Mammary epithelial cell (primary cell): ENCODE measurements at regions of chr15 and their contacts with region 1.

Region 1: DNA sequence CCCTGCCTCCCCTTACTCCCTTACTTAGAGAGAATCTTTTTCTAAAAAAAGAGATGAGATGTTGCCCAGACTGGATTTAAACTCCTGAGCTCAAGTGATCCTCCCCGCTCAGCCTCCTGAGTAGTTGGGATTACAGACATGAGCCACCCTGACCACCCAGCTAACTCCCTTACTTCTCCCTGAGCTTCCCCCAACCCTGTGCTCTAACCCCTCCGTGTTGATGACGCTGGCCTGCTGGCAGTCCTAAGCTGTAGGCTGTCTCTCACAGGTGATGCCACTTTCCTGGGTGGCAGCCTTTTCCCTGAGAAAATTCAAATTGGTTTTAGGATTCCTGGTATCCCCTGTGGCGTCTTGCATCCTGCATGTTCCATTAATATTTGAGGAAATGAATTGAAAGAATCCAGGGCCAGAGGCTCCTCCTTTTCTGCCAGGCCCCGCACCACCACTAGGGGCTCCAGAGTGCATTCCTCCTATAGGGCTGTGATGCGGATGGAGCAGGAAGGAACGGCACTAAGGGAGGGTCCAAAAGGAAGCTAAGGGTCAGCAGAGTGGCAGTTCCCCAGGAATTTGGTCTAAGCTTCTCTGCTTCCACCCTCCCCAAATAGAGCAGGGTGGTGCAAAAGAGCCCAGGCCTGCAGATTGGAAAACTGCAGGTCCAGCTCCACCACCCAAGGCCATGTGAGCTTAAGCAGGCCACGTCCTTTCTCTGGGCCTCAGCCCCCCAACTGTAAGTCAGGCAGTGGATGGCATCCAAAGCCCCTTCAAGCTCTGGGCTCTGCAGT is 101.1 kb downstream of the DAPK2 start:
- DNase-seq: peak; percentile 61
- H3K4me3 ChIP-seq: no peak overlapping the region
- H3K27ac ChIP-seq: peak overlapping the region; percentile 41
- H3K4me1 ChIP-seq: peaks cover 20% of the 10 kb centered on the region
- H3K27me3 ChIP-seq: no peaks in the 10 kb centered on the region
- CTCF ChIP-seq: peak; percentile 97 to 99

Region 2: DNA sequence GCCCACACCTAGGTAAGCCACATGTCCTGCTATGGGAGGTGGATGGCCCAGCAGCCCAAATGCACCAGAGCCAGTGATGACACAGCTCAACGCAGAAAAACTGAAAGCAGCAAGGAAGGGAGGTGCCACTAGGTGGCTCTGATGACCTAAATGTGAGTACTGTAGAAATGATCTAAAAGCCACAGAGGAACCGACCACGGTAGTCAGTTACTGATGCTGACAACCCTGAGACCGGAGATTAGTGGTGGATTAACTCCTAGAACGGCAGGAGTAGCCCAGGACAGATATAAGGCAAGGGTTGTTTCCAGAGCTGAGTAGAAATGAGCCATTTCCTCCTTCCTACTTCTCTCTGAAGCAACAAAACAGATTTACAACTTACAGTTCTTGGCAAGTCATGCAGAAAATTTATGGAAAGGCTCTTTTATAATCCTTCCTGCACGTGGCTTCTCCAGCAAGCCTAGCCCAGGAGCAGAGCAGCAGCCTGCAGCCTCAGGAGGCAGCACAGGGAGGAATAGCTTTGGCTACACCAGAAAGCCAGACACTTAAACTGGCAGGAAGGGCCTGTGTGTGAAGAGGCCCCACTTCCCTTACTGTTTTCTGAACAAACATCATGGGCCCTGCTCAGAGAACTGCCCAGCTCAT is 334.9 kb before region 1 on chr15:
- CTCF ChIA-PET with region 1: interaction called, 3 read pairs
- dilution Hi-C with region 1: no loop called
- in situ Hi-C with region 1: no loop called
- intact Hi-C with region 1: loop called (anchors 2 kb)
- DNase-seq: peak; percentile 67
- H3K4me3 ChIP-seq: no peak overlapping the region
- H3K27ac ChIP-seq: no peak overlapping the region
- H3K4me1 ChIP-seq: peaks cover under 1% of the 10 kb centered on the region
- H3K27me3 ChIP-seq: no peaks in the 10 kb centered on the region
- CTCF ChIP-seq: peak; percentile 81 to 85

Region 3: DNA sequence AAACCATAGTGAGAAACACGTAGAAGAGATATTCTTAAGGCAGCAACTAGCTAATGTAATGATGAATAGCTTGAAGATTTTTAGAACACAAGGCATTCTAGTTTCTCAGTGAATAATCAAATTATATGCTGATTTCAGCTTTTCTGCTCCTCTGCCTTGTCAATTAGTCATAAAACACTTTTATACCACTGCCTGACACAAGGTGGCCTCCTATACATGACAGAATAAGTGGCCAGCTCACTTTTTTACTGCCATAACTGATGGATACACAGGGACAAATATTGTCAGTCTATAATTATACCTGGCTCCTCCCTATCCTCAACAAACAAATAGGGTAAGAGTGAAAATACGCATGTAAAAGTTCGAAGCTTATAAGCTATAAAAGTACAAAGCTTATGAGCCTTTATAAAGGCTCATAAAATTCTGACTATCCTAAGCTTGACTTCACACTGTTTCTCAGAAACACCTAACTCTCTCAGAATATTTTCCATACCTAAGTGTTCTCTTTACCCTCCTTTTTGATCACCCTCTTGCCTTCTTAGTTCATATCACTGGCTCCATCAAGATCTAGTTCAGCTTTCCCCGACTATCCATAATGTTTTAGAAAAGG is 193.0 kb before region 1 on chr15:
- CTCF ChIA-PET with region 1: interaction called, 12 read pairs
- dilution Hi-C with region 1: no loop called
- in situ Hi-C with region 1: no loop called
- intact Hi-C with region 1: no loop called
- DNase-seq: peak; percentile 40
- H3K4me3 ChIP-seq: no peak overlapping the region
- H3K27ac ChIP-seq: no peak overlapping the region
- H3K4me1 ChIP-seq: no peaks in the 10 kb centered on the region
- H3K27me3 ChIP-seq: no peaks in the 10 kb centered on the region
- CTCF ChIP-seq: peak; percentile 80 to 83

Region 4: GRCh38 chr15:63983061-63983711 is 38.0 kb after region 1 on chr15:
- CTCF ChIA-PET with region 1: no interaction called
- dilution Hi-C with region 1: loop called (anchors 5 kb)
- in situ Hi-C with region 1: no loop called
- intact Hi-C with region 1: no loop called
- DNase-seq: no peak
- H3K4me3 ChIP-seq: no peak overlapping the region
- H3K27ac ChIP-seq: no peak overlapping the region
- H3K4me1 ChIP-seq: peaks cover 12% of the 10 kb centered on the region
- H3K27me3 ChIP-seq: no peaks in the 10 kb centered on the region
- CTCF ChIP-seq: no peak

Region 5: DNA sequence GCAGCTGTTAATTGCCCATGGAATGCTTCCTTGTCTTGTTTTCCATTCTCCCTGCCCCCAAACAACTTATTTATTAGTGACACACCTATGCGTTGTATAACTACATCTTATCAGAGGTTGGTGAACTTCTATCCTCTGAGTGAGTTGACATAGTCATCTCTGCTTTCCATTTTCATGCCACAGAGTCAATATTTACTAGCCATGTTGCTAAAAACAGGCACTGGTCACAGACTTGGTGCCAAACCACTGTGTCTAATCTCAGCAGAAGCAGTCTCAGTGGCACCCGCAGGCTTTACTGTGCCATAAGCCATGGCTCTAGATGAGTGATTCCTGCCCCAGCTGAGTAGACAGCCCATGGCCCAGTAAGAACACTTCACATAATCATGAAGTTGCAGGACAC is 74.6 kb after region 1 on chr15:
- CTCF ChIA-PET with region 1: no interaction called
- dilution Hi-C with region 1: loop called (anchors 5 kb)
- in situ Hi-C with region 1: no loop called
- intact Hi-C with region 1: no loop called
- DNase-seq: no peak
- H3K4me3 ChIP-seq: no peak overlapping the region
- H3K27ac ChIP-seq: no peak overlapping the region
- H3K4me1 ChIP-seq: peaks cover 28% of the 10 kb centered on the region
- H3K27me3 ChIP-seq: no peaks in the 10 kb centered on the region
- CTCF ChIP-seq: no peak

Region 6: GRCh38 chr15:64093627-64094417 is 148.6 kb after region 1 on chr15 and contains the start of gene CIAO2A:
- CTCF ChIA-PET with region 1: interaction called, 11 read pairs
- dilution Hi-C with region 1: no loop called
- in situ Hi-C with region 1: no loop called
- intact Hi-C with region 1: no loop called
- DNase-seq: peak; percentile 99
- H3K4me3 ChIP-seq: peak within 1 kb of the TSS; percentile 62 to 69 (median 67)
- H3K27ac ChIP-seq: peak within 1 kb of the TSS; percentile 64
- H3K4me1 ChIP-seq: peaks cover 29% of the 10 kb centered on the region
- H3K27me3 ChIP-seq: no peaks in the 10 kb centered on the region
- CTCF ChIP-seq: no peak
- total RNA-seq, gene CIAO2A: 31.8 to 47.0 TPM